ENCODE measurements at regions of chr16 and their contacts with region 1.

Region 1: GRCh38 chr16:71894921-71895678 is at the start of gene IST1:
- DNase-seq: peak; percentile 98
- H3K4me3 ChIP-seq: peak within 1 kb of the TSS; percentile 84 to 98 (median 95)
- H3K27ac ChIP-seq: peak within 1 kb of the TSS; percentile 88
- H3K4me1 ChIP-seq: peaks cover 8% of the 10 kb centered on the region
- H3K27me3 ChIP-seq: no peaks in the 10 kb centered on the region
- CTCF ChIP-seq: no peak
- POLR2A ChIP-seq: peak; percentile 95
- total RNA-seq, gene IST1: 165 and 185 TPM in 2 replicates

Region 2: GRCh38 chr16:70737377-70738082 is 1157.6 kb before region 1 on chr16:
- CTCF ChIA-PET with region 1: no interaction called
- POLR2A ChIA-PET with region 1: no interaction called
- dilution Hi-C with region 1: no loop called
- intact Hi-C with region 1: no loop called
- DNase-seq: no peak
- H3K4me3 ChIP-seq: no peak overlapping the region
- H3K27ac ChIP-seq: no peak overlapping the region
- H3K4me1 ChIP-seq: peaks cover 3% of the 10 kb centered on the region
- H3K27me3 ChIP-seq: no peaks in the 10 kb centered on the region
- CTCF ChIP-seq: no peak
- POLR2A ChIP-seq: no peak

Region 3: GRCh38 chr16:71723537-71724319 is 171.4 kb before region 1 on chr16:
- CTCF ChIA-PET with region 1: no interaction called
- POLR2A ChIA-PET with region 1: no interaction called
- dilution Hi-C with region 1: no loop called
- intact Hi-C with region 1: loop called (anchors 2 kb)
- DNase-seq: peak; percentile 75
- H3K4me3 ChIP-seq: peak overlapping the region; percentile 72 to 87 (median 74)
- H3K27ac ChIP-seq: peak overlapping the region; percentile 70
- H3K4me1 ChIP-seq: peaks cover 13% of the 10 kb centered on the region
- H3K27me3 ChIP-seq: no peaks in the 10 kb centered on the region
- CTCF ChIP-seq: no peak
- POLR2A ChIP-seq: peak; percentile 52

Region 4: GRCh38 chr16:71845639-71846430 is 49.3 kb before region 1 on chr16 and contains the start of gene ATXN1L:
- CTCF ChIA-PET with region 1: interaction called, 3 read pairs
- POLR2A ChIA-PET with region 1: no interaction called
- dilution Hi-C with region 1: no loop called
- intact Hi-C with region 1: loop called (anchors 2 kb)
- DNase-seq: peak; percentile 71
- H3K4me3 ChIP-seq: peak within 1 kb of the TSS; percentile 70 to 91 (median 83)
- H3K27ac ChIP-seq: peak within 1 kb of the TSS; percentile 88
- H3K4me1 ChIP-seq: peaks cover 12% of the 10 kb centered on the region
- H3K27me3 ChIP-seq: no peaks in the 10 kb centered on the region
- CTCF ChIP-seq: no peak
- POLR2A ChIP-seq: peak; percentile 93
- total RNA-seq, gene ATXN1L: 23.9 and 24.9 TPM in 2 replicates

Region 5: GRCh38 chr16:71927383-71927782 is 32.3 kb after region 1 on chr16:
- CTCF ChIA-PET with region 1: interaction called, 6 read pairs
- POLR2A ChIA-PET with region 1: interaction called, 6 read pairs
- dilution Hi-C with region 1: no loop called
- intact Hi-C with region 1: loop called (anchors 1 kb)
- DNase-seq: peak; percentile 90
- H3K4me3 ChIP-seq: no peak overlapping the region
- H3K27ac ChIP-seq: peak overlapping the region; percentile 75
- H3K4me1 ChIP-seq: peaks cover 55% of the 10 kb centered on the region
- H3K27me3 ChIP-seq: no peaks in the 10 kb centered on the region
- CTCF ChIP-seq: no peak
- POLR2A ChIP-seq: peak; percentile 27

Region 6: DNA sequence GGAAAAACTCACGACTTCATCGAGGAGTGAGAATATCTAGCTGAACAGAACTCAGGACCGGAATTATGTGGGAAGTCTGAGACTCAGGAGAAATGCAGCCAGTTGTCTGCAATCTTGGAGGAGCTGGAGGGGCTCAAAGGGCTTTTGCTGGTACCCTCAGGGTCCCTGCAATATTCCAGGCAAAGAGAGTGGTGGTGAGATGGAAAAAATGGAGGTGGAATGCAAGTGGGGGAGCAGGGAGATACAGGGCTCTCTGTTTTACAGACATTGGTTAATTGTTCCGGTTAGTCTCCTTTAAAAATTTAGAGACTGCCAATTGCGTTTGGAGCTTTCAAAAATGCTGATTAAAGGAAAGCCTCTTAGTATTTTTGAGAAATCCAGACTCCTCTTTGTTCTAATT is 141.0 kb after region 1 on chr16:
- CTCF ChIA-PET with region 1: no interaction called
- POLR2A ChIA-PET with region 1: no interaction called
- dilution Hi-C with region 1: no loop called
- intact Hi-C with region 1: no loop called
- DNase-seq: no peak
- H3K4me3 ChIP-seq: no peak overlapping the region
- H3K27ac ChIP-seq: no peak overlapping the region
- H3K4me1 ChIP-seq: no peaks in the 10 kb centered on the region
- H3K27me3 ChIP-seq: no peaks in the 10 kb centered on the region
- CTCF ChIP-seq: no peak
- POLR2A ChIP-seq: no peak

Region 7: GRCh38 chr16:72093448-72094265 is 198.6 kb after region 1 on chr16 and contains the starts of genes DHX38 and TXNL4B:
- CTCF ChIA-PET with region 1: no interaction called
- POLR2A ChIA-PET with region 1: no interaction called
- dilution Hi-C with region 1: no loop called
- intact Hi-C with region 1: loop called (anchors 1 kb)
- DNase-seq: peak; percentile 99
- H3K4me3 ChIP-seq: peak within 1 kb of the TSS; percentile 59 to 98 (median 87)
- H3K27ac ChIP-seq: peak within 1 kb of the TSS; percentile 80
- H3K4me1 ChIP-seq: peaks cover 18% of the 10 kb centered on the region
- H3K27me3 ChIP-seq: no peaks in the 10 kb centered on the region
- CTCF ChIP-seq: no peak
- POLR2A ChIP-seq: peak; percentile 81
- total RNA-seq, gene DHX38: 78.4 and 78.6 TPM in 2 replicates
- total RNA-seq, gene TXNL4B: 11.7 and 12.7 TPM in 2 replicates

Measured in endothelial cell of umbilical vein (primary cell).